PC-9 (cell line): ENCODE measurements at regions of chr12 and their contacts with region 1.

Region 1: DNA sequence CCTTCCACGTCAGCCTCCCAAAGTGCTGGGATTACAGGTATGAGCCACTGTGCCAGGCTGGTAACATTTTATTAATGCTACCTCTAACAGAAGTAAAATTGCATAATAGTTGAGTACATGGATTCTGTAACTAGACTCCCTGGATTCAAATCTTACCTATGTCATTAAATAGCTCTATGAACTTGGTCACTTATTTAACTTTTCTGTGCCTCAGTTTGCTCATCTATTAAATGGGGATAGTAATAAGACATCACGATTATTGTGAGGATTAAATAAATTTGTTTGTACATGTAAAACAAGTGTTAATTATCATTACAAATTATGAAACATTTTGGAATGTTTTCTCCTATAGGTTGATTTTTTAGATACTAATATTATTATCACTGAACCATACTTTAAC is 6.7 kb downstream of the ACTR6 start:
- DNase-seq: no peak
- H3K4me3 ChIP-seq: no peak overlapping the region
- H3K27ac ChIP-seq: no peak overlapping the region
- H3K4me1 ChIP-seq: no peaks in the 10 kb centered on the region; the same call in 1 of the 2 replicates
- H3K27me3 ChIP-seq: no peaks in the 10 kb centered on the region
- CTCF ChIP-seq: no peak

Region 2: DNA sequence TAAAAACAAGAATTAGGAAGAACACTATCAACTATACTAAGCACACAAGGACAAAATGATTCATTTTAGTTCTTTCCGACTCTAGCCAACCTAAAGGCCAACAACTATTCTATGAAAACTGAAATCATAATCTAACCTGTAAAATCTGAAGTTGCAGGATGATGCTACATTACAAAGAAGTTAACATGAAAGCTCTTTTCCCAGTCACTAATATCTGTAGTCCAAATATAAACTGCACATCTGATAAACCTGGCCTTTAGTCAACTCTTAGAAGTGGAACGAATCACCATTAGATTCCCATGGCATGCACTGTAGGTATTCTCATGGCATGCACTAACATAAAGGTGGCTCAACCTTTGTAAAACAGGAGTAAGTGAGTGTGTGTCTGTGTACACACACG is 106.3 kb before region 1 on chr12:
- CTCF ChIA-PET with region 1: no interaction called
- POLR2A ChIA-PET with region 1: interaction called, 13 read pairs
- intact Hi-C with region 1: no loop called
- DNase-seq: no peak
- H3K4me3 ChIP-seq: no peak overlapping the region
- H3K27ac ChIP-seq: no peak overlapping the region
- H3K4me1 ChIP-seq: no peaks in the 10 kb centered on the region
- H3K27me3 ChIP-seq: no peaks in the 10 kb centered on the region
- CTCF ChIP-seq: no peak